ENCODE measurements at regions of chr14 and their contacts with region 1.

Region 1: GRCh38 chr14:91177073-91178034 is 63.5 kb downstream of the DGLUCY start:
- DNase-seq: peak; percentile 91
- H3K4me3 Mint-ChIP-seq: no peak overlapping the region
- H3K27ac Mint-ChIP-seq: peak overlapping the region; percentile 93
- H3K4me1 Mint-ChIP-seq: peaks cover 17% of the 10 kb centered on the region
- H3K27me3 Mint-ChIP-seq: no peaks in the 10 kb centered on the region

Region 2: DNA sequence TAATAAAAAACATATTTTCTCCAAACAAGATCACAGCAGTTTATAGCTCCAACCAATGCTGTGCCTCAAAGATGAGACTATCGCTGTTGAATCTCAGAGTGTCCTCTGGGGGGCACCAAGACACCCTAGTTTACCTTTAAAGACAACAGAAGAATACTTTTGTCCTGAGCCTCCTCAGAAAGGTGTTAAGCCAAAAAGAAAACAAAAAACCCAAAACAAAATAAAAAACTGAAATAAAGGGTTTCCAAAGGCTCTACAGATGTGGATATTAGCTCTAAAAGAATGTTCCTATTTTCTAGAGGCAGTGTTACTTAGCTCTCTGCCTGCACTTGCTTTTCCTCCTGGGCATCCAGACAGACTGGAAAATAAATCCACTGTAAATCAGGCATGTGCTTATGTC is 274.3 kb before region 1 on chr14:
- intact Hi-C with region 1: loop called (anchors 1 kb)
- DNase-seq: peak; percentile 89
- H3K4me3 Mint-ChIP-seq: no peak overlapping the region
- H3K27ac Mint-ChIP-seq: no peak overlapping the region
- H3K4me1 Mint-ChIP-seq: peaks cover 30% of the 10 kb centered on the region
- H3K27me3 Mint-ChIP-seq: no peaks in the 10 kb centered on the region

Region 3: DNA sequence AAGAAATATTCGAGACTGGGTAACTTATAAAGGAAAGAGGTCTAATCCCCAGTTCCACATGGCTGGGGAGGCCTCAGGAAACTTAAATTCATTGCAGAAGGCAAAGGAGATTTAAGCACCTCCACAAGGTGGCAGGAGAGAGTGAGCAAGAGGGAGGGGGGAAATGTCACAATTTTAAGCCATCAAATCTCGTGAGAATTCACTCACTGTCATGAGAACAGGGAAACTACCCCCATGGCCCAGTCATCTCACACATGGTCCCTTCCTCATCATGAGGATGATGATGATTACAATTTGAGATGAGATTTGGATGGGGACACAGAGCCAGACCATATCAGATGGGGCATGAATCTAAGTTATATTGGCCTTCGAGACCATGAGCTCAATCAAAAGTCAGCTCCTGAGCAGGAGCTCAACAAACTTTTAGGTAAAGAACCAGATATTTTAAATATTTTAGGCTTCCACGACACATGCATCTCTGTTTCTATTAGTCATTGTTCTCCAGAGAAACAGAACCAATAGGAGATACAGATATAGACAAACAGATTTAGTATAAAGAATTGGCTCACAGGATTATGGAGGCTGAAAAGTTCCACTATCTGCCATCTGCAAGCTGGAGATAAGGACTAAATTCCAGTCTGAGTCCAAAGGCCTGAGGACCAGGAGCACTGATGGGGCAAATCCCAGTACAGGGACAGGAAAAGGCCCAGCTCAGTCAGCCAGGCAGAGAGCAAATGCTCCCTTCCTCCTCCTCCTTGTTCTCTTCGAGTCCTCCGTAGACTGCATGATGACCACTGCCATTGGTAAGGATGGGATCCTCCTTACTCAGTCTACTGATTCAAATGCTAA is 38.6 kb before region 1 on chr14:
- intact Hi-C with region 1: loop called (anchors 5 kb)
- DNase-seq: peak; percentile 88
- H3K4me3 Mint-ChIP-seq: no peak overlapping the region
- H3K27ac Mint-ChIP-seq: peak overlapping the region; percentile 42
- H3K4me1 Mint-ChIP-seq: peaks cover 48% of the 10 kb centered on the region
- H3K27me3 Mint-ChIP-seq: no peaks in the 10 kb centered on the region

Region 4: GRCh38 chr14:91193069-91193468 is 15.7 kb after region 1 on chr14:
- intact Hi-C with region 1: loop called (anchors 1 kb)
- DNase-seq: no peak
- H3K4me3 Mint-ChIP-seq: no peak overlapping the region
- H3K27ac Mint-ChIP-seq: no peak overlapping the region
- H3K4me1 Mint-ChIP-seq: peaks cover 39% of the 10 kb centered on the region
- H3K27me3 Mint-ChIP-seq: no peaks in the 10 kb centered on the region

Region 5: GRCh38 chr14:91244501-91244901 is 67.1 kb after region 1 on chr14 and contains the start of gene GPR68:
- intact Hi-C with region 1: loop called (anchors 1 kb)
- DNase-seq: peak; percentile 84
- H3K4me3 Mint-ChIP-seq: peak within 1 kb of the TSS; percentile 84
- H3K27ac Mint-ChIP-seq: peak within 1 kb of the TSS; percentile 91
- H3K4me1 Mint-ChIP-seq: peaks cover 82% of the 10 kb centered on the region
- H3K27me3 Mint-ChIP-seq: no peaks in the 10 kb centered on the region
- total RNA-seq, gene GPR68: 4.6 and 4.9 TPM in 2 replicates

Region 6: GRCh38 chr14:91261115-91261514 is 83.8 kb after region 1 on chr14:
- intact Hi-C with region 1: loop called (anchors 2 kb)
- DNase-seq: peak; percentile 87
- H3K4me3 Mint-ChIP-seq: no peak overlapping the region
- H3K27ac Mint-ChIP-seq: peak overlapping the region; percentile 85
- H3K4me1 Mint-ChIP-seq: peaks cover 60% of the 10 kb centered on the region
- H3K27me3 Mint-ChIP-seq: no peaks in the 10 kb centered on the region

Region 7: DNA sequence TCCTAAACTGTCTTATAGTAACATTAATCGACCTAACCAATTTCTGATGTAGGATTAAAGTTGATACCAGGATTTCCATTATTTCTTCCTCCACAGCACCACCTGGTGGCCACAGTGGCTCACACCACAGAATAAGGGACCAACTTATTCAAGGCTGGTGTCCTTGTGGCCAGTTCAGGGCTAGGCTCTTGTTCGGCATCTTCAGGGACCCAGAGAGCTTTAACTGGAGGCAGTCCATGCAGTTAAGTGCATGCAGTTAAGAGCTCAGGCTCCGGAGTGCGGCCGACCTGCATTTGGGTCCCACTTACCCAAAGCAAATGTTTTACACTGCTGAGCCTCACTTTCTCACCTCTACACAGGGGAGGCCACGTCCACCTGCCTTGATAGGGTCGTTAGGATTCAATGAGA is 109.2 kb after region 1 on chr14:
- intact Hi-C with region 1: loop called (anchors 1 kb)
- DNase-seq: peak; percentile 94
- H3K4me3 Mint-ChIP-seq: no peak overlapping the region
- H3K27ac Mint-ChIP-seq: peak overlapping the region; percentile 77
- H3K4me1 Mint-ChIP-seq: peaks cover 14% of the 10 kb centered on the region
- H3K27me3 Mint-ChIP-seq: no peaks in the 10 kb centered on the region

Region 8: GRCh38 chr14:91367173-91368171 is 190.1 kb after region 1 on chr14:
- intact Hi-C with region 1: no loop called
- DNase-seq: peak; percentile 87
- H3K4me3 Mint-ChIP-seq: peak overlapping the region; percentile 71
- H3K27ac Mint-ChIP-seq: peak overlapping the region; percentile 79
- H3K4me1 Mint-ChIP-seq: peaks cover 68% of the 10 kb centered on the region
- H3K27me3 Mint-ChIP-seq: no peaks in the 10 kb centered on the region